Activated CD8-positive, alpha-beta T cell treated with anti-CD3 and anti-CD28 coated beads for 36 hours (primary cell): ENCODE measurements at regions of chr6 and their contacts with region 1.

Region 1: DNA sequence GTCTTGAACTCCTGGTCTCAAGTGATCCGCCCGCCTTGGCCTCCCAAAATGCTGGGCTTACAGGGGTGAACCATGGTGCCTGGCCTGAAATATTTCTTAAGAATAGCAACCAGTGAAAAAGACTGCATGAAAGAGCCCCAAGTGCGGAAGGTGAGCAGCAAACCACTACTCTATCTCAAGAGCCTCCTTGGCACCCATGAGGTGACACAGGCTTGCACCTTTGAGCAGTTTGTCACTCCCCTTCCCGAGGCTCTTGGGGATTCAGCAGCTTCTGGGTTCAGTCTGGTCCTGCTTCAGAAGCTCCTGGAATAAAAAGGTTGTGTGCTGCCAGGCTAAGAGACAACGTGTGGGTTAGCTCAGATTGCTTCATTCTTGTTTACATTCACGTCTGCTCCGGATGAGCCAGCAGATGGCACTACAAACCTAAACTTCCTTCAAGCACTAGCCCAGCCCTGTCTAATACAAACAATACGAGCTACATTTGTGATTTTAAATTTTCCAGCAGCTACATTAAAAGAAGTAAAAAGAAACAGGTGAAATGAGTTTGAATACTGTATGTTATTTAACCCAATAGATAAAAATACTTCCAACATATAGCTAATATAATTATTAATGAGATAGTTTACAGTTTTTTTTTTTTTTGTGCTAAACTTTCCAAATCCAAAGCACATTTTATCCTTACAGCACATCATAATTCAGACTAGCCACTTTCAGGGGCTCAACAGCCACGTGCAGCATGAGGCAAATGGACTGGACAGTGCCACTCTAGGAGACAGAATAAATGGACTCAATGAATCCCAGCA is 46.2 kb downstream of the GJA10 start:
- DNase-seq: peak; percentile 85
- ATAC-seq: peak; percentile 80
- H3K4me3 Mint-ChIP-seq: no peak overlapping the region
- H3K27ac Mint-ChIP-seq: peak overlapping the region; percentile 73
- H3K4me1 Mint-ChIP-seq: peaks cover 57% of the 10 kb centered on the region
- H3K27me3 Mint-ChIP-seq: no peaks in the 10 kb centered on the region
- CTCF ChIP-seq: peak; percentile 83

Region 2: GRCh38 chr6:89952686-89953085 is 12.3 kb after region 1 on chr6:
- CTCF ChIA-PET with region 1: interaction called, 24 read pairs
- POLR2A ChIA-PET with region 1: interaction called, 4 read pairs
- intact Hi-C with region 1: no loop called
- DNase-seq: peak; percentile 85
- ATAC-seq: peak; percentile 84
- H3K4me3 Mint-ChIP-seq: peak overlapping the region; percentile 35
- H3K27ac Mint-ChIP-seq: peak overlapping the region; percentile 89
- H3K4me1 Mint-ChIP-seq: peaks cover 72% of the 10 kb centered on the region
- H3K27me3 Mint-ChIP-seq: no peaks in the 10 kb centered on the region
- CTCF ChIP-seq: no peak

Region 3: GRCh38 chr6:89997456-89998445 is 57.3 kb after region 1 on chr6:
- CTCF ChIA-PET with region 1: interaction called, 12 read pairs
- POLR2A ChIA-PET with region 1: interaction called, 3 read pairs
- intact Hi-C with region 1: no loop called
- DNase-seq: no peak
- ATAC-seq: no peak
- H3K4me3 Mint-ChIP-seq: no peak overlapping the region
- H3K27ac Mint-ChIP-seq: peak overlapping the region; percentile 32
- H3K4me1 Mint-ChIP-seq: peaks cover 59% of the 10 kb centered on the region
- H3K27me3 Mint-ChIP-seq: no peaks in the 10 kb centered on the region
- CTCF ChIP-seq: no peak

Region 4: GRCh38 chr6:90074161-90074850 is 133.9 kb after region 1 on chr6:
- CTCF ChIA-PET with region 1: interaction called, 29 read pairs
- POLR2A ChIA-PET with region 1: interaction called, 4 read pairs
- intact Hi-C with region 1: no loop called
- DNase-seq: no peak
- ATAC-seq: no peak
- H3K4me3 Mint-ChIP-seq: peak overlapping the region; percentile 96
- H3K27ac Mint-ChIP-seq: peak overlapping the region; percentile 94
- H3K4me1 Mint-ChIP-seq: peaks cover 84% of the 10 kb centered on the region
- H3K27me3 Mint-ChIP-seq: no peaks in the 10 kb centered on the region
- CTCF ChIP-seq: no peak

Region 5: DNA sequence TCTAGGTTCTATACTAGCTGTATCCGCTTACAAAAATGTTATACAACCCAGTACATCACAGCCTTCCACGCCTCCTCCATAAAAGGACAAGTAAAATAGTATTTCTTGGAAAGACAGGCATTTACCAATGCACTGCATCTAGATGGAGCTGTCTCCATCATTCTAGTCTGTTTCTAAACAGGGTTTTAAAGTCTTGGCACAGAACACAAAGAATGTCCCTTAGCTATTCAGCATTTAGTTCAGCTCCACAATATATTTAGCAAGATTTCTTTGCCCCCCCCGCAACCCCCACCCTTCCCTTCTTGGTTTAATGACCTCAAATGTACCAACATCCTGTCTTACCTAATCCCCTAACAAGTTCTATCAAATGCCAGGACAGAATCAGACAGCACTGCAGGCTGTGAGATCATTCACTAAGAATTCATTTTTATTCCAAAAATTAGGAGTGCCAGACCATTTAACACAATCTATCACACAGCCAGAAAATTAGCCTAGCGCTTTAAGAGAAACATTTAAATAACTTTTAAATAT is 157.6 kb after region 1 on chr6:
- CTCF ChIA-PET with region 1: interaction called, 15 read pairs
- POLR2A ChIA-PET with region 1: no interaction called
- intact Hi-C with region 1: no loop called
- DNase-seq: peak; percentile 68
- ATAC-seq: peak; percentile 44
- H3K4me3 Mint-ChIP-seq: no peak overlapping the region
- H3K27ac Mint-ChIP-seq: peak overlapping the region; percentile 85
- H3K4me1 Mint-ChIP-seq: peaks cover 88% of the 10 kb centered on the region
- H3K27me3 Mint-ChIP-seq: no peaks in the 10 kb centered on the region
- CTCF ChIP-seq: no peak

Region 6: DNA sequence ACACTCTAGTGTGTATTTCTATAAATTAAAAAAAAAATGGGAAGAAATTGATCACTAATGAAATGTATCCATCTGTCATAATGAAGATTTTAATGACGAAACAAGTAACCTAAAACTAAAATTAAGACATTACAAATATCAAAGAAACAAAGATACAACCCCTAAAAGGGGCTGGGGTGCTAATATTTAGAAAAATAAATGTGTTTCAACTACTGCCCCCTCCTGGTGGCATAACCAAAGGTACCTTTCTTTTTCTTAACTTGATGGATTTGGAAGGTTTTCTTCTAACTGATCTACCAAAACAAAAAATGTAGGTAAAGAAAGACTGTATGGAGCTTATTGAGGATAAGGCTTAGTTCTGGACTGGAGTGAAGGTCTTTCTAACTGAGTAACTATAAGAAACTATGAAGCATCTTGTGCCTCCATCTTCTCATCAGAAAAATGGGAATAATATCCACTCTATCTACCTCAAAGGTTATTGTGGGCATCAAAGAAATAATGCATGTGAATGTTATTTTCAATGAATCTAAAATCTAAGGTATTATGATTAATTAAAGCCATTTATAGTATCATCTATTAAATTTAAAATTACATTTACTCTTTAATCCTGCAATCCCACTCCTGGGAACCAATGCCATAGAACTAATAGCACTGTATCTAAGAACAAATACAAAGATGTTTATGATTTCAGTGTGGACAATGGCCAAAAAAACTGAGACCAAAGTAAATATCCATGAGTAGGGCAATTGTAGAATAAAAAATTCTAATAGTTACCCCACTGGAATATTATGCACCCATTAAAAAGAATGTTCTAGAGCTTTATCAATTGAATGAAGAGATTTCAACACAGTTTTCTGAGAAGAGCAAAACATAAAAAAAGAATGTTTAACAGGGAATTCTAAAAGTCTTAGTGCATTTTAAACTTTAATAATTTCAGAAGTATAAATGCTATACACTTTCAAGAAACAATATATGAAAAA is 239.1 kb after region 1 on chr6:
- CTCF ChIA-PET with region 1: interaction called, 35 read pairs
- POLR2A ChIA-PET with region 1: no interaction called
- intact Hi-C with region 1: loop called (anchors 10 kb)
- DNase-seq: peak; percentile 64
- ATAC-seq: no peak
- H3K4me3 Mint-ChIP-seq: no peak overlapping the region
- H3K27ac Mint-ChIP-seq: peak overlapping the region; percentile 87
- H3K4me1 Mint-ChIP-seq: peaks cover 81% of the 10 kb centered on the region
- H3K27me3 Mint-ChIP-seq: no peaks in the 10 kb centered on the region
- CTCF ChIP-seq: peak; percentile 75

Region 7: GRCh38 chr6:90296346-90297114 is 356.1 kb after region 1 on chr6 and contains the start of gene BACH2:
- CTCF ChIA-PET with region 1: interaction called, 14 read pairs
- POLR2A ChIA-PET with region 1: no interaction called
- intact Hi-C with region 1: no loop called
- DNase-seq: peak; percentile 99
- ATAC-seq: peak; percentile 69
- H3K4me3 Mint-ChIP-seq: peak within 1 kb of the TSS; percentile 83
- H3K27ac Mint-ChIP-seq: peak within 1 kb of the TSS; percentile 94
- H3K4me1 Mint-ChIP-seq: peaks cover 38% of the 10 kb centered on the region
- H3K27me3 Mint-ChIP-seq: peaks cover 3% of the 10 kb centered on the region
- CTCF ChIP-seq: no peak
- total RNA-seq, gene BACH2: 60.7 to 66.9 TPM